ENCODE measurements at regions of chr12 and their contacts with region 1.

Region 1: GRCh38 chr12:575948-576612 is 87.2 kb downstream of the NINJ2 start:
- DNase-seq: peak; percentile 76 to 82 (median 79)
- H3K4me3 ChIP-seq: peak overlapping the region; percentile 30
- H3K4me3 Mint-ChIP-seq: peak overlapping the region; percentile 38 to 85 (median 64)
- H3K27ac ChIP-seq: no peak overlapping the region
- H3K27ac Mint-ChIP-seq: peak overlapping the region in 5 of 8 donors; percentile 51 to 79 (median 68)
- H3K4me1 ChIP-seq: peaks cover 14% of the 10 kb centered on the region
- H3K4me1 Mint-ChIP-seq: peaks cover 13 to 21% (median 16%) of the 10 kb centered on the region in 3 donors
- H3K27me3 ChIP-seq: no peaks in the 10 kb centered on the region
- H3K27me3 Mint-ChIP-seq: peaks cover 0 to 2% of the 10 kb centered on the region in 2 donors

Region 2: DNA sequence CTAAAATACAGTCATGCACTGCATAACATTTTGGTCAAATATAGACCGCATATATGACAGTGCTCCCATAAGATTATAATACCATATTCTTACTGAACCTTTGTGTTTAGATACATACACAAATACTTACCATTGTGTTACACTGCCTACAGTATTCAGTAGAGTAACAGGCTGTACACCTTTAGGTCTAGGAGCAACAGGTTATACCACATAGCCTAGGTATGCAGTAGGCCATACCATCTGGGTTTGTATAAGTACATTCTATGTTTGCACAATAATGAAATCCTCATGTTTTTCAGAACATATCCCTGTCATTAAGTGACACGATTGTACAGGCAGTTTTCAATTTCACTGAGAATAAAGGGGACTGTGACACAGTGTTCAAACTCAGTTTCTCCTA is 209.3 kb before region 1 on chr12:
- CTCF ChIA-PET with region 1: no interaction called
- POLR2A ChIA-PET with region 1: no interaction called
- DNase-seq: no peak
- H3K4me3 ChIP-seq: no peak overlapping the region
- H3K4me3 Mint-ChIP-seq: no peak overlapping the region
- H3K27ac ChIP-seq: no peak overlapping the region
- H3K27ac Mint-ChIP-seq: no peak overlapping the region
- H3K4me1 ChIP-seq: no peaks in the 10 kb centered on the region
- H3K4me1 Mint-ChIP-seq: peaks cover 13 to 30% (median 28%) of the 10 kb centered on the region in 3 donors
- H3K27me3 ChIP-seq: no peaks in the 10 kb centered on the region
- H3K27me3 Mint-ChIP-seq: no peaks in the 10 kb centered on the region

Region 3: DNA sequence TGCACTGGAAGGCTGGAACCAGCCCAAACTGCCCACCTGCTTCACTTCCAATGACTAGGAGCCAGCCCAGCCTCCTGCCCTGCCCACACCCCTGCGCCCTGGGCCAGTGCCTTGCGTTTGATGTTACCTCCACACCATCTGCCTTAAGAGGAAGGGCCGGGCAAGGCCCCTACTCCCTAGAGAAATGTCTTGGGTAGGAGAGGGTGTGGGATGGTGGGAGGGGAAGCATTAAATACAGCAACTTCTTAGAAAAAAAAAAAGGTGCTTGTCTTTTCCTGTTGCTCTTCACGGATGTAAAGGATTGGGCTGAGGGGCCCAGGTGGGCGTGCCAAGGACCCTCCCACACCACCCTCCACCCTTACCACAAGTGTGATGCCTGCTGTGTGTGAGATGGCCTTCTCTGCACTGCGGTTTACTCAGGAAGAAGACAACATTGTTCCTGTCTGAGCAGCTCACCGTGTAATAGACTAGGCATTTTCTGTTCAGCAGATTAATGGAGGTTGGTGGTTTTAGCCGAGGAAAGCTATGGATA is 12.8 kb before region 1 on chr12:
- CTCF ChIA-PET with region 1: interaction called, 34 read pairs
- POLR2A ChIA-PET with region 1: no interaction called
- DNase-seq: peak; percentile 31 to 84 (median 80)
- H3K4me3 ChIP-seq: peak overlapping the region; percentile 62
- H3K4me3 Mint-ChIP-seq: peak overlapping the region; percentile 75 to 91 (median 83)
- H3K27ac ChIP-seq: peak overlapping the region; percentile 20
- H3K27ac Mint-ChIP-seq: peak overlapping the region; percentile 85 to 98 (median 95)
- H3K4me1 ChIP-seq: peaks cover 75% of the 10 kb centered on the region
- H3K4me1 Mint-ChIP-seq: peaks cover 66 to 71% (median 66%) of the 10 kb centered on the region in 3 donors
- H3K27me3 ChIP-seq: no peaks in the 10 kb centered on the region
- H3K27me3 Mint-ChIP-seq: no peaks in the 10 kb centered on the region

Region 4: GRCh38 chr12:774051-774614 is 198.1 kb after region 1 on chr12:
- CTCF ChIA-PET with region 1: interaction called, 14 read pairs
- POLR2A ChIA-PET with region 1: no interaction called
- DNase-seq: no peak
- H3K4me3 ChIP-seq: no peak overlapping the region
- H3K4me3 Mint-ChIP-seq: peak overlapping the region in 5 of 7 donors; percentile 12 to 44 (median 34)
- H3K27ac ChIP-seq: no peak overlapping the region
- H3K27ac Mint-ChIP-seq: peak overlapping the region; percentile 66 to 88 (median 80)
- H3K4me1 ChIP-seq: peaks cover 79% of the 10 kb centered on the region
- H3K4me1 Mint-ChIP-seq: peaks cover 75 to 96% (median 95%) of the 10 kb centered on the region in 3 donors
- H3K27me3 ChIP-seq: no peaks in the 10 kb centered on the region
- H3K27me3 Mint-ChIP-seq: no peaks in the 10 kb centered on the region

Region 5: GRCh38 chr12:818733-819132 is 242.7 kb after region 1 on chr12:
- CTCF ChIA-PET with region 1: interaction called, 56 read pairs
- POLR2A ChIA-PET with region 1: no interaction called
- DNase-seq: no peak
- H3K4me3 ChIP-seq: no peak overlapping the region
- H3K4me3 Mint-ChIP-seq: no peak overlapping the region
- H3K27ac ChIP-seq: no peak overlapping the region
- H3K27ac Mint-ChIP-seq: peak overlapping the region in 7 of 8 donors; percentile 29 to 82 (median 43)
- H3K4me1 ChIP-seq: peaks cover 16% of the 10 kb centered on the region
- H3K4me1 Mint-ChIP-seq: peaks cover 56 to 70% (median 68%) of the 10 kb centered on the region in 3 donors
- H3K27me3 ChIP-seq: no peaks in the 10 kb centered on the region
- H3K27me3 Mint-ChIP-seq: no peaks in the 10 kb centered on the region

Region 6: GRCh38 chr12:1093166-1093751 is 517.2 kb after region 1 on chr12:
- CTCF ChIA-PET with region 1: interaction called, 10 read pairs
- POLR2A ChIA-PET with region 1: no interaction called
- DNase-seq: peak in 3 of 5 donors; percentile 2 to 41 (median 38)
- H3K4me3 ChIP-seq: no peak overlapping the region
- H3K4me3 Mint-ChIP-seq: no peak overlapping the region
- H3K27ac ChIP-seq: no peak overlapping the region
- H3K27ac Mint-ChIP-seq: peak overlapping the region in 1 of 8 donors; percentile 29
- H3K4me1 ChIP-seq: no peaks in the 10 kb centered on the region
- H3K4me1 Mint-ChIP-seq: peaks cover 6 to 13% (median 9%) of the 10 kb centered on the region in 3 donors
- H3K27me3 ChIP-seq: no peaks in the 10 kb centered on the region
- H3K27me3 Mint-ChIP-seq: no peaks in the 10 kb centered on the region

Measured in CD8-positive, alpha-beta memory T cell (primary cell).